ENCODE measurements at regions of chr2 and their contacts with region 1.

Region 1: GRCh38 chr2:106284691-106285202 is 90.6 kb upstream of the UXS1 start:
- DNase-seq: no peak
- ATAC-seq: peak; percentile 1; the same call in 2 of the 3 replicates
- H3K4me3 ChIP-seq: no peak overlapping the region
- H3K27ac ChIP-seq: peak overlapping the region; percentile 83
- H3K4me1 ChIP-seq: peaks cover 73% of the 10 kb centered on the region
- H3K27me3 ChIP-seq: no peaks in the 10 kb centered on the region
- CTCF ChIP-seq: no peak
- EP300 ChIP-seq: no peak
- POLR2A ChIP-seq: no peak
- RAD21 ChIP-seq: no peak

Region 2: GRCh38 chr2:106095478-106096298 is 189.1 kb before region 1 on chr2:
- CTCF ChIA-PET with region 1: no interaction called
- POLR2A ChIA-PET with region 1: no interaction called
- in situ Hi-C with region 1: no loop called
- intact Hi-C with region 1: no loop called
- DNase-seq: no peak
- ATAC-seq: peak; percentile 38
- H3K4me3 ChIP-seq: no peak overlapping the region
- H3K27ac ChIP-seq: no peak overlapping the region
- H3K4me1 ChIP-seq: no peaks in the 10 kb centered on the region
- H3K27me3 ChIP-seq: no peaks in the 10 kb centered on the region
- CTCF ChIP-seq: no peak
- EP300 ChIP-seq: no peak
- POLR2A ChIP-seq: no peak
- RAD21 ChIP-seq: no peak

Region 3: DNA sequence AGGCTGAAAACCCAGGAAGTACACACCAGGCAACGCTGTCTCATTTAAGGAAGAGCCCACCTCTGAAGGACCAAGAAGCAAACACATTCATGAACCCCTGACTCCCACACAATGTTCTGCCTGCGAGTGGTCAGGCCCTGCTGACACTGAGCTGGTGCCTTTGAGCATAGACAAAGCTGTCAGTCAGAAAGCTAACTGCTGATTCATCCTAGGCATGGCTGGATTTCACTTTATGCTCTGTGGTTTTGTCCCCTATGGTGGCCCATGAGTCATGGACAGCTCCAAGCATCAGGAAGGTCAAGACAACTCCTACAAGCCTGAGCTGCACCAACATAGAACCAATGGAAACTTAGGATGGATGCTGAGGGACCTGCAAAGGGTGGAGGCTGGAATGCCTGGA is 169.5 kb before region 1 on chr2:
- CTCF ChIA-PET with region 1: no interaction called
- POLR2A ChIA-PET with region 1: no interaction called
- in situ Hi-C with region 1: no loop called
- intact Hi-C with region 1: no loop called
- DNase-seq: peak; percentile 84
- ATAC-seq: peak; percentile 77
- H3K4me3 ChIP-seq: no peak overlapping the region
- H3K27ac ChIP-seq: peak overlapping the region; percentile 27
- H3K4me1 ChIP-seq: peaks cover 35% of the 10 kb centered on the region
- H3K27me3 ChIP-seq: no peaks in the 10 kb centered on the region
- CTCF ChIP-seq: no peak
- EP300 ChIP-seq: no peak
- POLR2A ChIP-seq: no peak
- RAD21 ChIP-seq: no peak

Region 4: GRCh38 chr2:106272216-106272807 is 12.4 kb before region 1 on chr2:
- CTCF ChIA-PET with region 1: no interaction called
- POLR2A ChIA-PET with region 1: interaction called, 10 read pairs
- in situ Hi-C with region 1: no loop called
- intact Hi-C with region 1: no loop called
- DNase-seq: peak; percentile 62
- ATAC-seq: peak; percentile 76
- H3K4me3 ChIP-seq: no peak overlapping the region
- H3K27ac ChIP-seq: peak overlapping the region; percentile 34
- H3K4me1 ChIP-seq: peaks cover 54% of the 10 kb centered on the region
- H3K27me3 ChIP-seq: no peaks in the 10 kb centered on the region
- CTCF ChIP-seq: no peak
- EP300 ChIP-seq: no peak
- POLR2A ChIP-seq: no peak
- RAD21 ChIP-seq: no peak

Region 5: DNA sequence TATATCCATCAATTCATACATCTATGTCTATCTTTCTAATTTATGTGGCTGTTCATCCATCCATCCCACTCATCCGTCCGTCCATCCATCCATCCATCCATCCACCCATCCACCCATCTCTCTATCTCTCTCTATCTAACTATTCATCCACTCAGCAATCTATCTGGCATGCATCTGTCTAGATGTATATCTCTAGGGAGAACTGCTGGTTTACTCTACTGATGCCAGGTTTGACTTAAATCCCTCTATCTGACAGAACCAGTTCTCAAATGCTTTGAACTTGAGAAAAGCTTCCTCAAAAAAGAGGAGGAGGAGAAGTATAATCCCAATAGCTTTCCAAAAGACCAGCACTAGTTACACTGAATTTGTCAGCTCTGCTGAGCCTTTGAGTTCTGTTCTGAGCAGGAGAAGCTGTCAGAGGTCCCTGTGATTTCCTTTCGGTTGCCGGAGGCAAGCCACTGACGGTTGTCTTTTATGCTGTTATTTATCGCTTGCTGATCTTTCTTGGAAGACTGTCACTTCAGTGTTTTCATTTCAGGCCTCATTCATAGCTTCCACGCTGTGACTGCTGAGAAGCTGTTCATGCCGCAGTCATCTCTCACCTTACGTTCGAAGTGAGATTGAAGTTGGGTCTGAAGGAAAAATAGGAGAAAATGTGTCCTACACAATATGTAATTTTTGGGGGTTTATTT is 38.7 kb after region 1 on chr2:
- CTCF ChIA-PET with region 1: no interaction called
- POLR2A ChIA-PET with region 1: no interaction called
- in situ Hi-C with region 1: no loop called
- intact Hi-C with region 1: no loop called
- DNase-seq: no peak
- ATAC-seq: no peak
- H3K4me3 ChIP-seq: no peak overlapping the region
- H3K27ac ChIP-seq: no peak overlapping the region
- H3K4me1 ChIP-seq: no peaks in the 10 kb centered on the region
- H3K27me3 ChIP-seq: peaks cover 0 to 30% of the 10 kb centered on the region in 2 experiments; a peak in 4 of 5 replicates
- CTCF ChIP-seq: no peak
- EP300 ChIP-seq: no peak
- POLR2A ChIP-seq: no peak
- RAD21 ChIP-seq: no peak